Breast epithelium (tissue), 4 donors: ENCODE measurements at regions of chr14 and their contacts with region 1.

Region 1: GRCh38 chr14:46769292-46769691 is 117.7 kb upstream of the RPL10L start:
- DNase-seq: no peak
- H3K4me3 ChIP-seq: no peak overlapping the region
- H3K27ac ChIP-seq: no peak overlapping the region
- H3K4me1 ChIP-seq: no peaks in the 10 kb centered on the region
- H3K27me3 ChIP-seq: no peaks in the 10 kb centered on the region
- CTCF ChIP-seq: no peak
- POLR2A ChIP-seq: no peak

Region 2: GRCh38 chr14:46279327-46279726 is 490.0 kb before region 1 on chr14:
- intact Hi-C with region 1: loop called (anchors 5 kb)
- DNase-seq: no peak
- H3K4me3 ChIP-seq: no peak overlapping the region
- H3K27ac ChIP-seq: no peak overlapping the region
- H3K4me1 ChIP-seq: no peaks in the 10 kb centered on the region
- H3K27me3 ChIP-seq: no peaks in the 10 kb centered on the region
- CTCF ChIP-seq: no peak
- POLR2A ChIP-seq: no peak

Region 3: GRCh38 chr14:46717211-46717610 is 52.1 kb before region 1 on chr14:
- intact Hi-C with region 1: no loop called
- DNase-seq: no peak
- H3K4me3 ChIP-seq: no peak overlapping the region
- H3K27ac ChIP-seq: no peak overlapping the region
- H3K4me1 ChIP-seq: no peaks in the 10 kb centered on the region
- H3K27me3 ChIP-seq: no peaks in the 10 kb centered on the region
- CTCF ChIP-seq: no peak
- POLR2A ChIP-seq: no peak